CD8-positive, alpha-beta memory T cell (primary cell): ENCODE measurements at regions of chr12 and their contacts with region 1.

Region 1: DNA sequence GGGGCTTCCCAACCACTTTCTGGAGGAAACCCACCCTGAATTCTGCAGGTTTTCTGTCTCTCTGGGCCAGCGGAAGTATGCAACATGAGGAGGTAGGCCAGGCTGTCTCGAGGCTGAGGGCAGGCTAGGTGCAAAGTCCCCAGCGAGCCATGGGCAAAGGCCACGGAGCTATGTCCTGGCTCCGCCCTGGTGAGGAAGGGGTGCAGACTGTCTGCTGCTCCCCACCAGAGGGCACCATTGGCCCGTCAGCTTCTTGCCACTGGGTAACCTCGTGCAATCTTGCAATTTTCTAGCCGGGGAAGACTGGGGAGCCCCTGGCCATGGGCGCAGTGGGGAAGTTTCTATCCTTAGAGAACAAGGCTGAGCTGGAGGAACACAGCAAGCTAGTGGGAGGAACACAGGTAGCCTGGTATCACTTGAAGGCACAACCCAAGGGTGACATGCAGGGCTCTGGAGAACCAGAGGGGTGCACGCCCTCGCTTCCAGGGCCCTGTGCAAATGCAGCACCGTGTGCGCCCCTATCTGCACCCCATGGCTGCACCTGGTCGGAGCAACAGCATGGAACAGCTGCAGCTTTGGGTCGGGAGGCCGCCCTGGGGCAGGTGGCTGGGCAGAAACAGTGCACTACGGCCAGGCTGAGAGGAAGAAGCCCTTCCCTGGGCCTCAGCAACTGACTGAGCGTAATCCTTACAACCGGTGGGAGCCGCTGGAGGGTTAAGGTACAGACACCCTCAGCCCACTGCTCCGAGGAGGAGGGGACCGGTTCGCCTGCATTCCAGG is 27.6 kb upstream of the RPLP0 start:
- DNase-seq: peak; percentile 81 to 91 (median 83)
- H3K4me3 ChIP-seq: peak overlapping the region; percentile 48
- H3K4me3 Mint-ChIP-seq: peak overlapping the region; percentile 38 to 88 (median 71)
- H3K27ac ChIP-seq: peak overlapping the region; percentile 70
- H3K27ac Mint-ChIP-seq: peak overlapping the region; percentile 43 to 94 (median 86)
- H3K4me1 ChIP-seq: peaks cover 81% of the 10 kb centered on the region
- H3K4me1 Mint-ChIP-seq: peaks cover 79 to 84% (median 80%) of the 10 kb centered on the region in 3 donors
- H3K27me3 ChIP-seq: no peaks in the 10 kb centered on the region
- H3K27me3 Mint-ChIP-seq: peaks cover 0 to 1% of the 10 kb centered on the region in 2 donors

Region 2: GRCh38 chr12:120181991-120182631 is 46.4 kb before region 1 on chr12:
- CTCF ChIA-PET with region 1: no interaction called
- POLR2A ChIA-PET with region 1: no interaction called
- DNase-seq: no peak
- H3K4me3 ChIP-seq: no peak overlapping the region
- H3K4me3 Mint-ChIP-seq: no peak overlapping the region
- H3K27ac ChIP-seq: no peak overlapping the region
- H3K27ac Mint-ChIP-seq: peak overlapping the region in 1 of 8 donors; percentile 23
- H3K4me1 ChIP-seq: no peaks in the 10 kb centered on the region
- H3K4me1 Mint-ChIP-seq: peaks cover 11 to 25% (median 20%) of the 10 kb centered on the region in 3 donors
- H3K27me3 ChIP-seq: no peaks in the 10 kb centered on the region
- H3K27me3 Mint-ChIP-seq: no peaks in the 10 kb centered on the region

Region 3: DNA sequence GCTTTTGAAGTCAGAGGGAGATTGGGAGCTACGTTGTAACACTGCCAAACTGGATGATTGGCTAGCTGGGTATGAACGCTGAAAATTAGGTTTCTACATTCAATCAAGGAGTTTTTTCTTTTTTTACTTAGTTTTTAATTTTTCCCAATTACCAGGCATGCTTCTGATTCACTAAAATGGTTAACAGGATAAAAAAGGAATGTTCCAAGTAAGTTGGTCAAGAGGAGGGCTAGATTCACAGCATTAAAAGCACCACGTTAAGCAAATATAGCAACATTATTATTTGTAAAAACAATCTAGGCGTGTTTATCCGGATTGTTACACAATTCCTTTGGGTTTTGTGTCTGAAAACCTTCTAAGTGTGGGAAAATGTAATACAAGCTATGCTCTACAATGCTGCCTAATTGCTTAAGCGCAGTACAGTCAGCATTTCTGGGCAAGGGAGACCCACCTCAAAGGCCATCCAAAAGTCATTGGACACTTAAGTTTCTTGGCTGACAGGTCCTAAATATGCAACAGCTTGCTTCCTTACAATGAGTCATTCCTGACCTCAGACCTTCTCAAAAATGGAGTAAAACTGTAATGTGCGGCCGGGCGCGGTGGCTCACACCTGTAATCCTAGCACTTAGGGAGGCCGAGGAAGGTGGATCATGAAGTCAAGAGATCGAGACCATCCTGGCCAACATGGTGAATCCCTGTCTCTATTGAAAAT is 28.7 kb before region 1 on chr12:
- CTCF ChIA-PET with region 1: interaction called, 69 read pairs
- POLR2A ChIA-PET with region 1: interaction called, 15 read pairs
- DNase-seq: peak in 2 of 5 donors; percentile 14 to 23
- H3K4me3 ChIP-seq: peak overlapping the region; percentile 99
- H3K4me3 Mint-ChIP-seq: peak overlapping the region; percentile 85 to 99 (median 98)
- H3K27ac ChIP-seq: peak overlapping the region; percentile 86
- H3K27ac Mint-ChIP-seq: peak overlapping the region; percentile 89 to 99 (median 96)
- H3K4me1 ChIP-seq: peaks cover 46% of the 10 kb centered on the region
- H3K4me1 Mint-ChIP-seq: peaks cover 36 to 51% (median 44%) of the 10 kb centered on the region in 3 donors
- H3K27me3 ChIP-seq: no peaks in the 10 kb centered on the region
- H3K27me3 Mint-ChIP-seq: peaks cover 0 to 1% of the 10 kb centered on the region in 2 donors

Region 4: DNA sequence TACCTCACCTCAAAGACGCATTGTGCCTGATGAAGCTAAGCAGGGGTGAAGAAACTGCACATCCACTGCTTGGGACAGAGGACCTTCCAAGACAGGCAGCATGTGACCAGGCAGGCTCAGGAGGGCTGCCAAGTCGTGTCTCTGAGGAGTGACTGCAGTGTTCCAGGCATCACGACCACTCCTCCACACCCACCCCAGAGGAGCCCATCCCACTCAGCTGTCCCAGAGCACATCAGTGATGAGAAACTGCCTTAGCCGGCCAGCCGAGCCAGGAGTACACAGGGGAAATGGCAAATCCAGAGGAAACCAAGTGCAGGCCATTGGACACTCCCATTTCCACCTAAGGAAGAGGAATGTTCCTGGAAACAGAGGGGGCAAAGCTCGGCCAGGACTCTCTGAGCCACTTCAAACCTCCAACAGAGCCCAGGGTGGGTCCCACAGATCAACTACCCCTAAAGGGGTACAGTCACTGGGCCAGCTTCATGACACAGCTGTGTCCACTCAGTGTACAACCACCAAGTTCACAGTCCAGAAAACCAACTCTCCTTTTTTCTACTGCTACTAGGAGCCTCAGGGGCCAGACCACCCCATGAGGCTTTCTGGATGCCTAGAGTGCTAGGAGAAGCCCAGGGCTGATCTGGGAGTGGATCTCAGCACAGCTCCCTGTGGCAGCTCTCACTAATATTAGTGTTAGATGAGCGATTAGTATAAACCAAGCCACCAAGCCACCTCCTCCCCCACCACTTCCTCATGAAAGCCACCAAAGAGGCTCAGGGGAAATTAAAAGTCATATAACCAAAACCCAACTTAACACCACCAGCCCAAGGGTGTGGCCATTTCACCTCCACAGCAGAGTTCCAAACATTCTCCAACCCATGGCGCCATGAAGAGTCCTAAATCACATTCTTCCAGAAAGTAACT is 21.7 kb after region 1 on chr12:
- CTCF ChIA-PET with region 1: interaction called, 727 read pairs
- POLR2A ChIA-PET with region 1: interaction called, 28 read pairs
- DNase-seq: peak in 4 of 5 donors; percentile 29 to 69 (median 48)
- H3K4me3 ChIP-seq: peak overlapping the region; percentile 56
- H3K4me3 Mint-ChIP-seq: peak overlapping the region; percentile 49 to 93 (median 80)
- H3K27ac ChIP-seq: peak overlapping the region; percentile 41
- H3K27ac Mint-ChIP-seq: peak overlapping the region; percentile 80 to 97 (median 95)
- H3K4me1 ChIP-seq: peaks cover 85% of the 10 kb centered on the region
- H3K4me1 Mint-ChIP-seq: peaks cover 77 to 91% (median 89%) of the 10 kb centered on the region in 3 donors
- H3K27me3 ChIP-seq: no peaks in the 10 kb centered on the region
- H3K27me3 Mint-ChIP-seq: no peaks in the 10 kb centered on the region

Region 5: GRCh38 chr12:120286796-120287465 is 58.5 kb after region 1 on chr12:
- CTCF ChIA-PET with region 1: interaction called, 31 read pairs
- POLR2A ChIA-PET with region 1: interaction called, 45 read pairs
- DNase-seq: no peak
- H3K4me3 ChIP-seq: no peak overlapping the region
- H3K4me3 Mint-ChIP-seq: peak overlapping the region in 1 of 7 donors; percentile 61
- H3K27ac ChIP-seq: no peak overlapping the region
- H3K27ac Mint-ChIP-seq: peak overlapping the region in 1 of 8 donors; percentile 90
- H3K4me1 ChIP-seq: peaks cover 10% of the 10 kb centered on the region
- H3K4me1 Mint-ChIP-seq: peaks cover 4 to 7% (median 5%) of the 10 kb centered on the region in 3 donors
- H3K27me3 ChIP-seq: no peaks in the 10 kb centered on the region
- H3K27me3 Mint-ChIP-seq: peaks cover 0 to 3% of the 10 kb centered on the region in 2 donors

Region 6: DNA sequence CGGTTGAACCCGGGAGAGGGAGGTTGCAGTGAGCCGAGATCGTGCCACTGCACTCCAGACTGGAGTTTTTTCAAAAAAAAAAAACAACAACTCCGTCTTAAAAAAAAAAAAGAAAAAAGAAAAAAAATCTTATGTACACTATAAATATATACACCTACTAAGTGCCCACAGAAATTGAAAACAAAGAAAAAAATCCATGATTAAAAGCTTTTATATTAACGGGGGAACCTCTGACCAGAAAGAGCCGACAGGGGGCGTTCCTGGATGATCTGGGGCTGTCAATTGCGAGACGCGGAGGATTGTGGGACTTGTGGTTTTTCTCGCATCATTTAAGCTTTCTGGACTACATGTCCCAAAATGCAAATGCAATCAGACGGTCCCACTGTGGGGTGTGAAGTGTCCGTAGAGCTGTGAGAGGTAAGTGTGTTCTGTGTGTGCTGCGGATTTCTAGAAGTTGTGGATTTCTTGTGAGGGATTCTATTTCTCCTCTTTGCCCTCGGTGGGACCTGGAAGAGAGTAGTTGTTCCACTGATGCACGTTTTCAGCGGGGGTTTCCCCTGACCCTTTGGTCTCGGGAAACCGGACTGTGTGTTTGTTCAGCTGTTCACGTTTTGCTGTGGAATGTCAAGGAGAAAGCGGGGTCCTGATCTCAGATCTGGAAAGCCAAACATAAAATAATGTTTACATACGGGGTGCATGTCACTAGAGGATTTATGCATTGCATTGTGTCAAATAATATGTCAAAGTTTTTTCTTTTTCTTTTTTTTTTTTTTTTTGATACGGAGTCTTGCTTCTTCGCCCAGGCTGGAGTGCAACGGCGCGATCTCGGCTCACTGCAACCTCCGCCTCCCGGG is 73.7 kb after region 1 on chr12 and contains the start of gene SIRT4:
- CTCF ChIA-PET with region 1: interaction called, 10 read pairs
- POLR2A ChIA-PET with region 1: no interaction called
- DNase-seq: peak; percentile 82 to 91 (median 85)
- H3K4me3 ChIP-seq: peak within 1 kb of the TSS; percentile 100
- H3K4me3 Mint-ChIP-seq: peak within 1 kb of the TSS; percentile 88 to 98 (median 95)
- H3K27ac ChIP-seq: peak within 1 kb of the TSS; percentile 38
- H3K27ac Mint-ChIP-seq: peak within 1 kb of the TSS; percentile 60 to 94 (median 92)
- H3K4me1 ChIP-seq: no peaks in the 10 kb centered on the region
- H3K4me1 Mint-ChIP-seq: peaks cover 6 to 10% (median 7%) of the 10 kb centered on the region in 3 donors
- H3K27me3 ChIP-seq: no peaks in the 10 kb centered on the region
- H3K27me3 Mint-ChIP-seq: no peaks in the 10 kb centered on the region
- total RNA-seq, gene SIRT4: 1.8 to 1.9 TPM

Region 7: GRCh38 chr12:120588948-120589930 is 360.8 kb after region 1 on chr12:
- CTCF ChIA-PET with region 1: no interaction called
- POLR2A ChIA-PET with region 1: no interaction called
- DNase-seq: no peak
- H3K4me3 ChIP-seq: no peak overlapping the region
- H3K4me3 Mint-ChIP-seq: no peak overlapping the region
- H3K27ac ChIP-seq: no peak overlapping the region
- H3K27ac Mint-ChIP-seq: peak overlapping the region in 1 of 8 donors; percentile 39
- H3K4me1 ChIP-seq: no peaks in the 10 kb centered on the region
- H3K4me1 Mint-ChIP-seq: peaks cover under 1 to 1% (median 1%) of the 10 kb centered on the region in 3 donors
- H3K27me3 ChIP-seq: no peaks in the 10 kb centered on the region
- H3K27me3 Mint-ChIP-seq: peaks cover 0 to 3% of the 10 kb centered on the region in 2 donors